IMR-90 (cell line): ENCODE measurements at regions of chr7 and their contacts with region 1.

Region 1: DNA sequence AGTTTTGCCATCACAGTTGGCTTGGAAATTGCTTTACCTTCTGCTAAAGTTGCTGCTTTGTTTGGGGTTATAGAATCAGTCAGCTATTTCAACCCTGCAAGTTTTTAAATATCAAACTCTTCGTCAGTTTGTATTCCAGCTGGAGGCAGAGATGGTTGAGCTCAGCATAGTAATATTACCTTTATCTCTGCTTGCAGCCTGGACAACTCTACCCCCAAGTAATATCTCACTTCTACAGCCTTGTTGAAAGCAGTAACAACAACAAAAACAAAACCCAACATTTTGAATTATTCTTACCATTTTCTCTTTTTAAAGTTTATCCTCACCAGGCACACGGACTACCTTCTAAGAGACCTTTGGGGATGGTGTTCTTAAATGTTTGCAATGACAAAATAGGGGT is 239.1 kb upstream of the PHF14 start:
- DNase-seq: no peak
- ATAC-seq: no peak
- H3K4me3 ChIP-seq: no peak overlapping the region
- H3K27ac ChIP-seq: no peak overlapping the region
- H3K4me1 ChIP-seq: no peaks in the 10 kb centered on the region
- H3K27me3 ChIP-seq: no peaks in the 10 kb centered on the region
- CTCF ChIP-seq: no peak
- POLR2A ChIP-seq: no peak
- RAD21 ChIP-seq: no peak

Region 2: GRCh38 chr7:8817448-8818036 is 1917.1 kb before region 1 on chr7:
- CTCF ChIA-PET with region 1: no interaction called
- POLR2A ChIA-PET with region 1: no interaction called
- dilution Hi-C with region 1: no loop called
- in situ Hi-C with region 1: no loop called
- intact Hi-C with region 1: no loop called
- DNase-seq: no peak
- ATAC-seq: no peak
- H3K4me3 ChIP-seq: no peak overlapping the region
- H3K27ac ChIP-seq: no peak overlapping the region
- H3K4me1 ChIP-seq: no peaks in the 10 kb centered on the region
- H3K27me3 ChIP-seq: no peaks in the 10 kb centered on the region
- CTCF ChIP-seq: no peak
- POLR2A ChIP-seq: no peak
- RAD21 ChIP-seq: no peak

Region 3: DNA sequence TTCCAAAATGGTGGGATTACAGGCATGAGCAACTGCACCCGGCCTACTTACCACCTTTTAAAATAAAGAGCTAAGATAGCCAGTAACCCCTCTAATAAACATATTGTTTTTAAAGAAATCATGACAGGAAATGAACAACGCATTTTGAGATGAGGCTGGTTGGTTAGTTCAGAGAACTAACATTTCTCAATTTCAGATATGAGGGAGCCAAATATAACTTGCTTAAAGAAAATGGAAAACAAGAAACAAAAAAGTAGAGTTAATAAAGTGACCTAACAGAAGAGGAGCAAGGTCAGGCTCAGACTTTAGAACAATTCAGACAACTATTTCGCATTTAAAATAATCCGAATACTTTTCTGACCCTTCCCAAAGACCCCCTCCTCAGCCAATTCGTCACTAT is 15.8 kb before region 1 on chr7:
- CTCF ChIA-PET with region 1: no interaction called
- POLR2A ChIA-PET with region 1: no interaction called
- dilution Hi-C with region 1: no loop called
- in situ Hi-C with region 1: no loop called
- intact Hi-C with region 1: loop called (anchors 1 kb)
- DNase-seq: no peak
- ATAC-seq: no peak
- H3K4me3 ChIP-seq: no peak overlapping the region
- H3K27ac ChIP-seq: no peak overlapping the region
- H3K4me1 ChIP-seq: no peaks in the 10 kb centered on the region
- H3K27me3 ChIP-seq: no peaks in the 10 kb centered on the region
- CTCF ChIP-seq: no peak
- POLR2A ChIP-seq: no peak
- RAD21 ChIP-seq: no peak